Spleen (tissue), 13 donors: ENCODE measurements at regions of chr18 and their contacts with region 1.

Region 1: GRCh38 chr18:55234366-55235093 is 275.3 kb upstream of the CCDC68 start:
- DNase-seq: peak; percentile 83
- H3K4me3 ChIP-seq: no peak overlapping the region
- H3K27ac ChIP-seq: peak overlapping the region in 7 of 8 donors; percentile 5 to 58 (median 39)
- H3K4me1 ChIP-seq: peaks cover 3 to 34% (median 27%) of the 10 kb centered on the region in 6 donors
- H3K27me3 ChIP-seq: no peaks in the 10 kb centered on the region
- CTCF ChIP-seq: peak; percentile 46 to 80 (median 67)
- POLR2A ChIP-seq: no peak

Region 2: DNA sequence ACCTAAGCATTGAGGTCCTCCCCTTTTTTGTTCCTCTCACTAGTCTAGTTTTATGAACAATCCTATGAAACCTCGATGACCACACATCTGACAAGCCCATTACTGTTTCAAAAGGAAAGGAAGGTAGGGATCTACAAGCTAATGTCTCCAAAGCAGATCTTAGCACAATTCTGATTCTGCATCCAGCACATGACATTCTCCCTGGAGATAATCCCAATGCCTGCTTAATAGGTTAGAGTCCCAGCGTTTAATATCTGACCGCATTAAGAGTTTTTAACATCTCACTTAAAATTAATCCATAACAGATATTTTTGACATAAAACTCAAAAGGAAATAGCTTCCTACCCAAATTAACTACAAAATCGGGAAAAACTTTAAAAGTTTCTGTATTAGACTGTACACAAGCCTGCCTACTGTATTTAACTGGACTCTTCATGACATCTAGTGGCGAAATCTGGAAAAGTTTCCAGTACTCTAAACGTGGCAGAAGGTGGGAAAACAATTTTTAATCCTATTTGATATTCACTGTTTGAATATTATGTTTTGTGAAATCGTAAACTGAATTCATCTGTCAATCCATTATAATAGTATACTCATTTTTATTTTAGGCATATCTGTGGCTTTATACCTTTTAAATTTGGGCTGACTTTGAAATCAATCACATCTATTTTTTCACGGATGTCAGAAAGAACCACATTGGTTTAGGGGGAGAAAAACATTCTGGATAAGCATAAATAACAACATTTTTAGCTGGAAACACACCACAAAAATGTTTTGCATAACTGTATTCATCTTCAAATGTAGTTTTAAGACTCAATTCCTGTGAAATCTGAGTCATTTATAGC is 1341.5 kb after region 1 on chr18:
- intact Hi-C with region 1: loop called (anchors 10 kb)
- DNase-seq: no peak
- H3K4me3 ChIP-seq: no peak overlapping the region
- H3K27ac ChIP-seq: peak overlapping the region in 1 of 8 donors; percentile 51
- H3K4me1 ChIP-seq: peaks cover 0 to 30% (median 18%) of the 10 kb centered on the region in 6 donors
- H3K27me3 ChIP-seq: no peaks in the 10 kb centered on the region
- CTCF ChIP-seq: peak; percentile 25 to 82 (median 69)
- POLR2A ChIP-seq: no peak